Transverse colon (tissue), 4 donors: ENCODE measurements at regions of chr9 and their contacts with region 1.

Region 1: GRCh38 chr9:113657703-113658544 is 194.4 kb downstream of the RGS3 start:
- DNase-seq: peak; percentile 91
- H3K4me3 ChIP-seq: no peak overlapping the region
- H3K27ac ChIP-seq: no peak overlapping the region
- H3K4me1 ChIP-seq: peaks cover 0 to 13% (median 5%) of the 10 kb centered on the region in 4 donors
- H3K27me3 ChIP-seq: peaks cover 33% of the 10 kb centered on the region
- CTCF ChIP-seq: peak; percentile 90 to 96 (median 93)
- EP300 ChIP-seq: no peak
- POLR2A ChIP-seq: no peak

Region 2: DNA sequence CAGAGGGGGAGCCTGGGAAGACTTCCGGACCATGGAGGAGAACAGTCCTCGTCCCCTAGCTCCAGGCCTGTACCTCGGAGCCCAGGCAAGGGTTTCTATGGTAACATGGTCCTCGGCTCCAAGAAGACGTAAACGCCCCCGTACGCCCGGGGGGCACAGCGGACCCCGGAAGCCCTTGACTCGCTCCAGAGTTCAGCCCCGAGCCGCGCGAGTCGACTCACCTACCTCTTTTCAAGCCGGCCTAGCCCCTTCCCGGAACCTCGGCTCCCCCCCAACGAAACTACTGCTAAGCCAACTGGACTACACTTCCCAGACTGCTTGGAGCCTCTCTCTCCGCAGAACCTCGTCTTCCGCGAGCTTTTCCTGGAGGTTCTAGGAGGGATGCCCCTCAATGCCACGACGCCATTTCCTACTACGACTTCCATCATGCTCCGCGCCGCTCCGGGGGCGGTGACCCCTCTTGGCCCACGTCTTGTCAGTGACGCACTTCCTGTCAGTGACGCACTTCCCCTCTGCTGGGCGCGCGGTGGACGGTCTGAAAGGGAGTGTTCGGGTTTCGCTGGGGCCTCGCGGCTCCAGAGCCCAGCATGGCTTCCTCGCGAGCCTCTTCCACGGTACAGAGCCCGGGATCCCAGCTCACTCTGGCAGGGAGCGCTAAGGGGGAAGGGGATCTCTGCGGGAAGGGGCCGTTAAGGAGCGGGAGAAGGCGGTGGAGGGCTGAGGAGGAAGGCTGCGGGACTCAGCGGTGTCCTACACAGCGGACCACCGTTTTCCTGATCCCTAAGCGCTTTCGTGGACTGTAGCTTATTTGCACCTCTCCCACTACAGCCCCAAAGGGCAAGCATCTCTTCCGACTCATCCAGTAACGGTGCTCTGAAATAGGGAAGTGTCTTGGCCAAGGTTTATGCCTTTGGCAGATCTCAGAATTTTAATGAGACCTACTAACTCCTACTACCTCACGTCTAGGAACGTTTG is 382.5 kb before region 1 on chr9 and contains the starts of genes CDC26 and PRPF4:
- in situ Hi-C with region 1: loop called in 2 of 4 experiments (anchors 10 kb)
- intact Hi-C with region 1: no loop called
- DNase-seq: peak; percentile 98
- H3K4me3 ChIP-seq: peak within 1 kb of the TSS; percentile 51 to 85 (median 61)
- H3K27ac ChIP-seq: peak within 1 kb of the TSS; percentile 88 to 94 (median 90)
- H3K4me1 ChIP-seq: peaks cover 7 to 33% (median 12%) of the 10 kb centered on the region in 4 donors
- H3K27me3 ChIP-seq: no peaks in the 10 kb centered on the region
- CTCF ChIP-seq: no peak
- EP300 ChIP-seq: peak; percentile 26
- POLR2A ChIP-seq: peak; percentile 97
- total RNA-seq, gene CDC26: 15.7 to 43.8 (median 30.8) TPM
- total RNA-seq, gene PRPF4: 5.0 to 13.7 (median 9.6) TPM

Region 3: DNA sequence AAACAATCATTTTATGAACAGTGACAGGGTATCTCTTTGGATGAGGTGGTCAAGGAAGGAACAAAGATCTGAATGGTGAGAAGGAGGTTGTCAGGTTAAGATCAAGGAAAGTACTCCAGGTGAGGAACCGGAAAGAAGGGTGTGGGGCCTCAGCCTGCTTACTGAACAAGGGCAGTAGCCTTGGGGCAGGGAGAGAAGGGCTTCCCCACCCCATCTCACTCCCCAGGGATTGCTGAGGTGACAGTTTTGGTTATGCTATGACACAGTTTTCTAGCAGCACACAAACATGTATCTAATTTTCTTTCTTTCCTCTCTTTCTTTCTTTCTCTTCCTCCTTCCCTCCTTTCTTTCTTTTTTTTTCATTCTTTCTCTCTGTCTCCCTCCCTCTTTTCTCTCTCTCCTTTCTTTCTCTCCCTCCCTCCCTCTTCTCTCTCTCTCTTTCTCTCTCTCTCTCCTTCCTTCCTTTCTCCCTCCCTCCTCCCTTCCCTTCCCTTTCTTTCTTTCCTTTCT is 277.0 kb before region 1 on chr9:
- in situ Hi-C with region 1: no loop called
- intact Hi-C with region 1: no loop called
- DNase-seq: peak; percentile 58
- H3K4me3 ChIP-seq: no peak overlapping the region
- H3K27ac ChIP-seq: peak overlapping the region; percentile 86 to 91 (median 88)
- H3K4me1 ChIP-seq: peaks cover 3 to 46% (median 29%) of the 10 kb centered on the region in 4 donors
- H3K27me3 ChIP-seq: no peaks in the 10 kb centered on the region
- CTCF ChIP-seq: no peak
- EP300 ChIP-seq: no peak
- POLR2A ChIP-seq: no peak

Region 4: GRCh38 chr9:113436728-113437471 is 221.0 kb before region 1 on chr9:
- in situ Hi-C with region 1: loop called in 1 of 4 experiments (anchors 10 kb)
- intact Hi-C with region 1: no loop called
- DNase-seq: no peak
- H3K4me3 ChIP-seq: no peak overlapping the region
- H3K27ac ChIP-seq: no peak overlapping the region
- H3K4me1 ChIP-seq: no peaks in the 10 kb centered on the region
- H3K27me3 ChIP-seq: no peaks in the 10 kb centered on the region
- CTCF ChIP-seq: no peak
- EP300 ChIP-seq: no peak
- POLR2A ChIP-seq: no peak

Region 5: DNA sequence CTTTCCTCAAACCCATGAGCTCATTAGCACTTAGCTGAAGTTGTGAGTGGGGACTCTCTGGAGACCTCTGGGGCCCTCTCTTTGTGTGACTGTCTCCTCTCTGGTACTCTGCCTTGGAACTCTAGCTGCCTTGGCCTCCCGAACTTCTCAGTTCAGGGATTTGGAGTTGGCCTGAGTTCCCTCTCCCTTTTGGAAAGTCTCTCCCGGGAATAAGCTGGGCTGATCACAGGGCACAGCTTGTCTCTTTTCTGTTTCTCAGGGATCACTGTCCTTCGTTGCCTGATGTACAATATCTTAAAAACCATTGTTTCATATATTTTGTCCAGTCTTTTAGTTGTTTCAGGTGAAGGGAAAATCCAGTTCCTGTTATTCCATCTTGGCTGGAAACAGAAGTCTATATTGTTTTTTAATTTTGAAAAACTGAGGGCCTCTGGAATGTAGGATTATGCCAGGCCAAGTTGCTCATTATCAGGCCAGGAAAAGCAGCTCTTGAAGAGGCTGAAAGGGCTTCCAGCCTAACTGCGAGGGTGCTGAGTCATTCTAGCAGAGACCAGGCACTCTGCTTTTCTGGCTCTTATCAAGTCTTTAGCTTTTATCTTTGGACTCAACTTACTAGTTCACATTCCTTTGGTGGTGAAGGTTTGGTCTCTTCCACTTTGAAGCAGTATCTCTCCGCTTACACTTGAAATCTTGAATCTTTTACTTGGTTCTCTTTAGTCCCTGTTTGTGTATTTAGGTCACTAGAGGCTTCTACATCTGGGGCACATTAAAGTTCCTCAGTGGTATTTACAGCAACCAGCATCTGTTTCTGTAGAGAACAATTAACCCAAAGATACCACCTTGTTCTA is 202.8 kb before region 1 on chr9:
- in situ Hi-C with region 1: loop called in 1 of 4 experiments (anchors 10 kb)
- intact Hi-C with region 1: no loop called
- DNase-seq: no peak
- H3K4me3 ChIP-seq: no peak overlapping the region
- H3K27ac ChIP-seq: peak overlapping the region; percentile 71 to 87 (median 80)
- H3K4me1 ChIP-seq: peaks cover 7 to 22% (median 13%) of the 10 kb centered on the region in 4 donors
- H3K27me3 ChIP-seq: no peaks in the 10 kb centered on the region
- CTCF ChIP-seq: no peak
- EP300 ChIP-seq: no peak
- POLR2A ChIP-seq: no peak

Region 6: GRCh38 chr9:113501129-113501686 is 156.7 kb before region 1 on chr9:
- in situ Hi-C with region 1: no loop called
- intact Hi-C with region 1: no loop called
- DNase-seq: no peak
- H3K4me3 ChIP-seq: no peak overlapping the region
- H3K27ac ChIP-seq: peak overlapping the region in 3 of 4 donors; percentile 1 to 40 (median 26)
- H3K4me1 ChIP-seq: peaks cover 0 to 22% (median 9%) of the 10 kb centered on the region in 4 donors
- H3K27me3 ChIP-seq: no peaks in the 10 kb centered on the region
- CTCF ChIP-seq: no peak
- EP300 ChIP-seq: no peak
- POLR2A ChIP-seq: peak; percentile 18